ENCODE measurements at regions of chr20 and their contacts with region 1.

Region 1: DNA sequence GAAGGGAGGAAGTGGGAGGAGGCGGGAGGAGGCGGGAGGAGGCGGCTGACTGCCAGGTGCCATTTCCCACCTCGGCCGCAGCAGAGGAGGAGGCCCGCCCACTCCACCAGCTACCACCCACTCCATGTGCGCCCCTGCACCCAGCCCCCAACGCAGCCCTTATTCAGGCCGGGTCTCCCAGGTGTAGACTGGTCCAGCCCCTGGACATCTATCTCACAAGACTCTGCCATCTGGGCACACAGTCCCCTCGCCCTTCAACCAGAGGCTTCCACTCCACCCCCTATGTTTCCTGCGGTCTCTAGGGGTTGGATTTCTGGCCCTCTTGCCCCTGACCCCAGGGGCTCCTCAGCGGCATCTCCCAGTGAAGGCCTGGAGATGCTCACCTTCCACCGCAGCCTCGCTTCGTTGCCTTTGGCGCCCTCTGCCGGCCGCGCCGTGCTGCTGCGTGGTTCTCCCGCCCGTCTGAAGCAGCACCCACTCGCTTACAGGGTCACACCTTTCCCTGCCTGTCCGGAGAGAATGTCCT is 32.6 kb upstream of the FAM83D start:
- DNase-seq: peak; percentile 53 to 74
- H3K4me3 ChIP-seq: peak overlapping the region in 1 of 2 donors; percentile 15
- H3K27ac ChIP-seq: no peak overlapping the region
- H3K4me1 ChIP-seq: peaks cover 0 to 3% of the 10 kb centered on the region in 2 donors
- H3K27me3 ChIP-seq: no peaks in the 10 kb centered on the region
- CTCF ChIP-seq: peak; percentile 72 to 90 (median 82)
- POLR2A ChIP-seq: no peak

Region 2: DNA sequence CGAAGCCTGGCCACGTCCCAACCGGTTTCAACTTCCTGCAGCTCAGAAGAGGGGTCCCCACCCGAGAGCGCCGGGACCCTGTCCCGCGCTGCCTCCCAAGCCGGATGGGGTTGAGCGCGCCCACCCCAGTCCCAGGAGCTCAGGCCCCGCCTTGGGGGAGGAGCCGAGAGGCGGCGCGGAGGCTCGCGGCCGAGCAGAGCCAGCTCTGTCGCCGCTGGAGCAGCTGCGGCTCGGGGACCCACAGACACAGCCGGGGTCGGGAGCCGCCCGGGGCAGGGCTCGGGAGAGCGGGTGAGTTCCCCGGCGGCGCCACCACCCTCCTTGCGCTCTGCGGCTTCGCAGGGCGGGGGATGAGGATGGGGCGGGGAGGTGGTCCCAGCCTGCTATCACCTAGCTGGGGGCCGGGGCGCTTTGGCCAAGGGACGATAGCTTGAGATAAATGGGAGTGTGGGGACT is 88.1 kb before region 1 on chr20 and contains the start of gene PPP1R16B:
- intact Hi-C with region 1: loop called (anchors 10 kb)
- DNase-seq: peak in 1 of 2 donors; percentile 30
- H3K4me3 ChIP-seq: peak within 1 kb of the TSS; percentile 35 to 48
- H3K27ac ChIP-seq: peak within 1 kb of the TSS; percentile 52 to 71
- H3K4me1 ChIP-seq: peaks cover 0 to 17% of the 10 kb centered on the region in 2 donors
- H3K27me3 ChIP-seq: peaks cover 5 to 7% of the 10 kb centered on the region in 2 donors
- CTCF ChIP-seq: no peak
- POLR2A ChIP-seq: peak; percentile 34 to 38
- total RNA-seq, gene PPP1R16B: 7.6 to 15.8 (median 12.5) TPM

Region 3: DNA sequence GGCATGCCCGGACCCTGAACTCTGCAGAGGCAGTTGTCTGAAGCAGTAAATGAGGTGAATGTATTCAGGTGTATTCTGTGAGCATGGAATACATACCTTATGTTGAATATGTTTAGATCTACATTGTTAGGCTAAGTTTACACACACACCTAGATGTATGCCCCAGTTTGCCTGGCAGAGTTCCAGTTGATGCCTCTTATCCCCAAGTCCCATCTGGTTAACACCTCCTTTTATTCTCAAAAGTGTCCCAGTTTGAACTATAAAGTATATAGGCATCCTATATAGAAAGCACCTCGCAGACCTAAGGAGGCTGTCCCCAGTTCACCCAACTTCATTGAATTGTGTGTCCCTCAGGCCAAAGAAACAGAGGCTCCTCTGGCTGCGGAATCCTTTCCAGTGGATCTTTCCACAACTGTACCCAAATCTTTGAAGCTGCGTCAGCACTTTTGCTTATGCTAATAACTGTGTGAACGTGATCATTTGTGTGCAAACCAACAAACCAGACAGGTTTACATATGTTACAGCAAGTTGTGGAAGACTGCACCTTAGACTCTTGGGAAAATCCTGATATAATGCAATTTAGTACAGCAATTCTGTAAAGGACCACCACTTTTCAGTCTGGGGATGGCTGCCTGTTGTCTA is 63.7 kb after region 1 on chr20:
- intact Hi-C with region 1: no loop called
- DNase-seq: no peak
- H3K4me3 ChIP-seq: no peak overlapping the region
- H3K27ac ChIP-seq: no peak overlapping the region
- H3K4me1 ChIP-seq: no peaks in the 10 kb centered on the region
- H3K27me3 ChIP-seq: no peaks in the 10 kb centered on the region
- CTCF ChIP-seq: no peak
- POLR2A ChIP-seq: no peak

Measured in uterus (tissue), 4 donors.